ENCODE measurements at regions of chr1 and their contacts with region 1.

Region 1: GRCh38 chr1:111795401-111795800 is 39.7 kb downstream of the DDX20 start:
- DNase-seq: peak; percentile 42
- H3K4me3 ChIP-seq: no peak overlapping the region
- H3K27ac ChIP-seq: no peak overlapping the region
- H3K4me1 ChIP-seq: no peaks in the 10 kb centered on the region
- H3K27me3 ChIP-seq: peaks cover 22% of the 10 kb centered on the region
- CTCF ChIP-seq: no peak

Region 2: DNA sequence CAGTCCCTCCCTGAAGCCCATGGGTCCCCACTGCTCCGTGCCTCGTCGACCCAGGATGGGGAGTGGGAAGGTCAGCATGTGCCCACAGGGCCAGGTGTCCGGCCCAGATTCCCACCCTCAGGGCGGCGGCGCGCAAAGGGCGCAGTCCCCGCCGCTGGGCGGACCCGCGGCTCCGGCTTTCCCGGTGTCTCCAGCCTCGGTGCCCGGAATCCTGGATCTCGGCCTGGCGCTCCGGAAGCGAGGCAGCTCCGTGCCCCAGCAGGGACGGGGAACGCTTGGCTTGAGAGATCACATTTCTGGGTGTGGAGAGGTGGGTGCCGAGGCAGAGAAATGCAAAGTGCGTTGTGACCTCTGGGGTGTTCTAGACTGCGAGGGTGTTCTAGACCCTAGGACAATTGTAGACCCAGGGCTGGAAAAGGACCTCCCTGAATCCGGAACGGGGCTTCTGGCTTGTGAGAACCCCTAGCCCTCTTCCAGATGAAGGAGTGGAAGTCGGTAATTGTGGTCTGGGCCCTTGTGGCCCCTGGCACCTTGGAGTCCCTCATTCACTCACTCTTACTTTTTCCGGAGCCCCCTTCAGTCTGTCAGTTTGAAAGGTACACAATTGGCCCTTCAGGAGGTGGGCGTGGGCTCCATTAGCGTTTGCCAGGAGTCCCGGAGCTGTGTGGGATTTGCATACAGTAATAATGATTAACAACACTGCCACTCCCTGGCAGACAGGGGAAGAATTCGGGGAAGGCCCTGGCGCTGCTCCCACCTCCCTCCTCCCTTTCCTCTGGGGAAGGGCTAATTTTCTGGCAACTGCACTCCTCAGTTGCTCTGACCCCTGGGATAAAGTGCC is 195.7 kb after region 1 on chr1:
- CTCF ChIA-PET with region 1: no interaction called
- POLR2A ChIA-PET with region 1: no interaction called
- intact Hi-C with region 1: loop called (anchors 5 kb)
- DNase-seq: peak; percentile 80
- H3K4me3 ChIP-seq: peak overlapping the region; percentile 45
- H3K27ac ChIP-seq: no peak overlapping the region
- H3K4me1 ChIP-seq: peaks cover 19% of the 10 kb centered on the region
- H3K27me3 ChIP-seq: peaks cover 78% of the 10 kb centered on the region
- CTCF ChIP-seq: peak; percentile 62

Measured in A673 (cell line).